H1 (cell line): ENCODE measurements at regions of chr13 and their contacts with region 1.

Region 1: GRCh38 chr13:39379118-39379517 is 223.9 kb downstream of the LHFPL6 start:
- DNase-seq: no peak
- H3K4me3 ChIP-seq: no peak overlapping the region
- H3K27ac ChIP-seq: no peak overlapping the region
- H3K4me1 ChIP-seq: no peaks in the 10 kb centered on the region
- H3K27me3 ChIP-seq: peaks cover 26 to 42% (median 33%) of the 10 kb centered on the region in 4 experiments
- CTCF ChIP-seq: no peak
- EP300 ChIP-seq: no peak
- POLR2A ChIP-seq: no peak
- RAD21 ChIP-seq: no peak

Region 2: DNA sequence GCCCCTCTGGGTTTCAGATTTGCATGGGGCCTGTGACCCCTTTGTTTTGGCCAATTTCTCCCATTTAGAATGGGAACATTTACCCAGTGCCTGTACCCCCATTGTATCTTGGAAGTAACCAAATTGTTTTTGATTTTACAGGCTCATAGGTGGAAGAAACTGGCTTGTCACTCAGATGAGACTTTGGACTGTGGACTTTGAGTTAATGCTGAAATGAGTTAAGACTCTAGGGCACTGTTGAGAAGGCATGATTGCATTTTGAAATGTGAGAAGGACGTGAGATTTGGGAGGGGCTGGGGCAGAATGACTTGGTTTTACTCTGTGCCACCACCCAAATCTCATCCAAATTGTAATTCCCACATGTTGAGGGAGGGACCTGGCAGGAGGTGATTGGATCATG is 82.1 kb before region 1 on chr13:
- CTCF ChIA-PET with region 1: no interaction called
- POLR2A ChIA-PET with region 1: no interaction called
- DNase-seq: no peak
- H3K4me3 ChIP-seq: no peak overlapping the region
- H3K27ac ChIP-seq: no peak overlapping the region
- H3K4me1 ChIP-seq: no peaks in the 10 kb centered on the region
- H3K27me3 ChIP-seq: peaks cover 0 to 1% (median 0%) of the 10 kb centered on the region in 4 experiments; a peak in 1 of 7 replicates
- CTCF ChIP-seq: no peak
- EP300 ChIP-seq: no peak
- POLR2A ChIP-seq: no peak
- RAD21 ChIP-seq: no peak

Region 3: GRCh38 chr13:39326469-39327171 is 52.5 kb before region 1 on chr13:
- CTCF ChIA-PET with region 1: no interaction called
- POLR2A ChIA-PET with region 1: no interaction called
- DNase-seq: no peak
- H3K4me3 ChIP-seq: no peak overlapping the region
- H3K27ac ChIP-seq: no peak overlapping the region
- H3K4me1 ChIP-seq: peaks cover 0 to 20% (median 12%) of the 10 kb centered on the region in 4 experiments; a peak in 4 of 7 replicates
- H3K27me3 ChIP-seq: no peaks in the 10 kb centered on the region
- CTCF ChIP-seq: no peak
- EP300 ChIP-seq: no peak
- POLR2A ChIP-seq: no peak
- RAD21 ChIP-seq: no peak

Region 4: DNA sequence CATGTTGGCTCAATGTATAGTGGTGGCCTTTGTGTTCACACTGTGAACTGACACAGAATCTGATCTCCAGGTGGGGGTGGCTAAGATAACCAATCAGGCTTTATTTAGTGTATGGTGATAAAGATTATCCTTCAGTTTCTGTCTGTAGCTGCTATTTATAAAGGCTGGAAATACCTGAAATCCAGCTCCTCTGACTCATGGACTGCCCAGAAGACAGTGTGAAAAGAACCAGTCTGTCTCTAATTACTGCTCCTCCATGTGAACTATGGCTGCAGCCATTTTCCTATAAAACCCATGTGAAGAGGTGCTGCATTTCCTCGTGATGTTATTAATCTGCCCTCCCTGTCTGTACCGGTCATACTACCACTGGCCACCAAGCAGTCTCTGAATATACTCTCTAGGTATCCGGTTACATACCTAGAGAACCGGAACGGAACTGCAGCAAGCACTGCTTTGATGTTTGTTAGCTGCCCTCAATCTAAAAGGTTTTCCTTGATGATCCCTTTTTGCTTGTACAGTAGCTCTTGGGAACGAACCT is 14.1 kb before region 1 on chr13:
- CTCF ChIA-PET with region 1: interaction called, 10 read pairs
- POLR2A ChIA-PET with region 1: no interaction called
- DNase-seq: no peak
- H3K4me3 ChIP-seq: no peak overlapping the region
- H3K27ac ChIP-seq: no peak overlapping the region
- H3K4me1 ChIP-seq: peaks cover 0 to 8% (median 0%) of the 10 kb centered on the region in 4 experiments; a peak in 3 of 7 replicates
- H3K27me3 ChIP-seq: no peaks in the 10 kb centered on the region
- CTCF ChIP-seq: peak in 2 of 3 experiments; percentile 9 to 29; a peak in 2 of 4 replicates
- EP300 ChIP-seq: no peak
- POLR2A ChIP-seq: no peak
- RAD21 ChIP-seq: no peak

Region 5: DNA sequence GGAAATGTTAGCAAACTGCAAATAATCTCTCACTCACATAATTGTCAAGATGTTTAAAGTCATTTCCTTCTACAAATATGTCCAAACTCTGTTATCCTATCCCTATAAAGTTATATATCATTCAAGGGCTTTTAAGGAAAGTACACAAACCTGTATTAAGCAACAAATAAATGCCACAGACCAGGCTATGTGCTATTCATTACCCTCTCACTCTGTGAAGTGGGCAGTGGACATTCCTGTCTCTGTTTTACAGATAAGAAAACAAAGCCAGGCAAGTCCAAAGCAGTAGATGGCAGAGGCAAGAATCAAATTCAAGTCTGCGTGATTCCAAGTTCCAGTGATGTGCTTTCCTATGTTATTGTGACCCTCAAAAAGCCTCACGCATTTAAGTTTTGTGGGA is 83.3 kb after region 1 on chr13:
- CTCF ChIA-PET with region 1: no interaction called
- POLR2A ChIA-PET with region 1: no interaction called
- DNase-seq: no peak
- H3K4me3 ChIP-seq: no peak overlapping the region
- H3K27ac ChIP-seq: no peak overlapping the region
- H3K4me1 ChIP-seq: peaks cover 0 to 5% (median 0%) of the 10 kb centered on the region in 4 experiments; a peak in 1 of 7 replicates
- H3K27me3 ChIP-seq: no peaks in the 10 kb centered on the region
- CTCF ChIP-seq: no peak
- EP300 ChIP-seq: no peak
- POLR2A ChIP-seq: no peak
- RAD21 ChIP-seq: no peak